AG04450 (cell line): ENCODE measurements at regions of chr10 and their contacts with region 1.

Region 1: DNA sequence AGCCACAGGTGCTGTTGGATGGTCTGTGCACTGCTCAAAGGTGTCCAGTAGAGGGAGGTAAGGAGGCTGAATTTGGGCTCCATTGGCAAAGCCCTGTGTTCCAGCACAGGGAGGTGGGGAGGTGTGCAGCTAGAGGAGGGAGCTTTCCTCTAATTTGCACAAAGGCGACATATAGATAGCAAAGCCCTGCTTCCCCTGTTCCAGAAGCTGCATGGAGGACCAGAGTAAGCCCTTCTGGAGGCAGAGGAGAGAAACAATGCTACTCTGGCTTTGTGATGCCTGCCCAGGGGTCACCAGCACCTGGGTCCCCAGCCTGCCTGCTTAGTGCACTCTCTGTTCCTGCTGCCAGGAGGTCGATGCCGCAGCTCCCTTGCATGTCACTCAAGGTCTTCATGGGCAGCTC is 3.4 kb upstream of the ARHGAP22 start:
- DNase-seq: no peak
- H3K4me3 ChIP-seq: no peak overlapping the region
- H3K27ac ChIP-seq: no peak overlapping the region
- H3K27me3 ChIP-seq: no peaks in the 10 kb centered on the region
- CTCF ChIP-seq: peak; percentile 75

Region 2: GRCh38 chr10:48279081-48279751 is 329.1 kb before region 1 on chr10:
- CTCF ChIA-PET with region 1: no interaction called
- POLR2A ChIA-PET with region 1: no interaction called
- DNase-seq: no peak
- H3K4me3 ChIP-seq: no peak overlapping the region
- H3K27ac ChIP-seq: no peak overlapping the region
- H3K27me3 ChIP-seq: peaks cover 5% of the 10 kb centered on the region
- CTCF ChIP-seq: no peak

Region 3: DNA sequence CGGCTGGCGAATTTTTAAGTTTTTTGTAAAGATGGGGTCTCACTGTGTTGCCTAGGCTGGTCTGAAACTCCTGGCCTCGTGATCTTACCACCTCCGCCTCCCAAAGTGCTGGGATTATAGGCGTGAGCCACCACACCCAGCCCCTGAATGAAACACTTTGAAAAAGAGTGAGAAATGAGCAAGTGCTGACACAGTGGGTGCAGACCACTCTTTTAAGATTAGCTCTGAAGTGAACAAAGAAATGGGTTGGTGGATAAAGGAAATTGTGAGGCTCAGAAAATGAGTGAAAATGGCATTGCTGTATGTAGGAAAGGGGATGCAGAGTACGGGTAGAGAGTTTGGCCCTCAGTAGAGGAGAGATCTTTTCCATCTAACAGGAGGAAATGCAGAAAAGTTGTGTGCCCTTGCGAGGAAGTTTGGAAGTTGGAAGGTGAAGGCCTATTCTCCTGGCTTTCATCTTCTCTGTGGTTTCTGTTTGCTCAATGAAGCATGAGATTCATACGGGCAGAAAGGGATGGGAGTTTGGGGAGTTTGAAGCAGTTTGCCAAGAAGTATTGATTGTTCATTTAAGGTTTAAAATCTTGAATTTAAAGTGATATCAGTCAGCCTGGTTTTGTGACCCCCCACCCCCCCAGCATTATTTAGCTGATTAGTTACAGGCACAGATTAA is 290.8 kb before region 1 on chr10:
- CTCF ChIA-PET with region 1: no interaction called
- POLR2A ChIA-PET with region 1: no interaction called
- DNase-seq: no peak
- H3K4me3 ChIP-seq: no peak overlapping the region
- H3K27ac ChIP-seq: no peak overlapping the region
- H3K27me3 ChIP-seq: no peaks in the 10 kb centered on the region
- CTCF ChIP-seq: no peak

Region 4: GRCh38 chr10:48589266-48589665 is 19.0 kb before region 1 on chr10:
- CTCF ChIA-PET with region 1: interaction called, 8 read pairs
- POLR2A ChIA-PET with region 1: interaction called, 11 read pairs
- DNase-seq: peak; percentile 78
- H3K4me3 ChIP-seq: no peak overlapping the region
- H3K27ac ChIP-seq: peak overlapping the region; percentile 89
- H3K27me3 ChIP-seq: no peaks in the 10 kb centered on the region
- CTCF ChIP-seq: no peak

Region 5: GRCh38 chr10:48623607-48624132 is 15.4 kb after region 1 on chr10:
- CTCF ChIA-PET with region 1: interaction called, 14 read pairs
- POLR2A ChIA-PET with region 1: no interaction called
- DNase-seq: no peak
- H3K4me3 ChIP-seq: no peak overlapping the region
- H3K27ac ChIP-seq: no peak overlapping the region
- H3K27me3 ChIP-seq: no peaks in the 10 kb centered on the region
- CTCF ChIP-seq: no peak